ENCODE measurements at regions of chr13 and their contacts with region 1.

Region 1: GRCh38 chr13:45417790-45418534 is at the start of gene SLC25A30:
- DNase-seq: peak; percentile 87 to 95 (median 90)
- ATAC-seq: peak; percentile 89
- H3K4me3 Mint-ChIP-seq: peak within 1 kb of the TSS; percentile 91 to 99 (median 98)
- H3K27ac Mint-ChIP-seq: peak within 1 kb of the TSS; percentile 90 to 98 (median 96)
- H3K4me1 Mint-ChIP-seq: peaks cover 15 to 35% (median 25%) of the 10 kb centered on the region in 4 donors
- H3K27me3 Mint-ChIP-seq: no peaks in the 10 kb centered on the region
- polyA plus RNA-seq, gene SLC25A30: 1.2 to 1.9 (median 1.8) TPM

Region 2: GRCh38 chr13:45367358-45367757 is 50.6 kb before region 1 on chr13:
- POLR2A ChIA-PET with region 1: interaction called, 10 read pairs
- DNase-seq: peak; percentile 63 to 96 (median 86)
- ATAC-seq: peak; percentile 99
- H3K4me3 Mint-ChIP-seq: peak overlapping the region; percentile 32 to 81 (median 71)
- H3K27ac Mint-ChIP-seq: peak overlapping the region; percentile 60 to 95 (median 93)
- H3K4me1 Mint-ChIP-seq: peaks cover 28 to 75% (median 61%) of the 10 kb centered on the region in 4 donors
- H3K27me3 Mint-ChIP-seq: no peaks in the 10 kb centered on the region

Region 3: DNA sequence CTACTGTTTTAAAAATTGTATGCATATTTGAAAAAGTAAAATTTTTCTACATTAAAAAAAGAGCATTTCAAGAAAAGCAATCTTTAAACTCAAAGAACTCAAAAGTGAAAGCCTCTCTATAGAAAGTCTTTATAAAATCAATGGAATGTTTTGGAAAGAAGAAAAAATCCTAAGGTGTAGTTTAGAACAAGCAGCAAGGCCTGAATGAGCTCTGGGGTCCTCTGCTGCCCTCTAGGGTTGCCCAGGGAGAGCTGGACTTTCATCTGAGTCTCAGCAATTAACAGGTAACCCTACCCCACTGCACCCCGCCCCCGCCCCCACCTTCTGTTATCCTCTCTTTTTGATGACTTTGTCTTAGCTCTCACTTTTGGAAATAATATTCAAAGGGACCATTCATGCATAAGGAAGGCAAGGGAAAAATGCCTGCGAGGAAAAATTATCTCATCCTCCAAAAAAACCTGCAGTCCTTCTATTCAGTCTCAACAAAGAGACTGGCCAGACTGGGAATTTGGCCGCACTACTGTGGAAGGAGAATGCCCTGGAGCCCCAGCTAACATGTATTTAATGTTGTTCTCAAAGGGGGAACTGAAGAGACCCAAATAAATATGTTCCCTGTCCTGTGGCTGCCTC is 23.9 kb before region 1 on chr13:
- POLR2A ChIA-PET with region 1: interaction called, 26 read pairs
- DNase-seq: peak in 6 of 10 donors; percentile 10 to 31 (median 22)
- ATAC-seq: no peak
- H3K4me3 Mint-ChIP-seq: peak overlapping the region in 1 of 10 donors; percentile 30
- H3K27ac Mint-ChIP-seq: peak overlapping the region in 8 of 10 donors; percentile 2 to 95 (median 46)
- H3K4me1 Mint-ChIP-seq: peaks cover 19 to 50% (median 47%) of the 10 kb centered on the region in 4 donors
- H3K27me3 Mint-ChIP-seq: no peaks in the 10 kb centered on the region

Region 4: GRCh38 chr13:45464687-45465453 is 46.9 kb after region 1 on chr13 and contains the start of gene COG3:
- POLR2A ChIA-PET with region 1: interaction called, 43 read pairs
- DNase-seq: peak; percentile 88 to 98 (median 94)
- ATAC-seq: peak; percentile 89 to 94
- H3K4me3 Mint-ChIP-seq: peak within 1 kb of the TSS; percentile 89 to 97 (median 92)
- H3K27ac Mint-ChIP-seq: peak within 1 kb of the TSS; percentile 87 to 98 (median 96)
- H3K4me1 Mint-ChIP-seq: peaks cover 20 to 58% (median 53%) of the 10 kb centered on the region in 4 donors
- H3K27me3 Mint-ChIP-seq: no peaks in the 10 kb centered on the region
- polyA plus RNA-seq, gene COG3: 22.2 to 29.9 (median 27.4) TPM